ENCODE measurements at regions of chr4 and their contacts with region 1.

Region 1: GRCh38 chr4:107666134-107666533 is 53.9 kb downstream of the PAPSS1 start:
- DNase-seq: peak; percentile 55
- ATAC-seq: peak; percentile 68
- H3K4me3 ChIP-seq: no peak overlapping the region
- H3K27ac ChIP-seq: no peak overlapping the region
- H3K4me1 ChIP-seq: peaks cover 2% of the 10 kb centered on the region; the same call in 1 of the 2 replicates
- H3K27me3 ChIP-seq: no peaks in the 10 kb centered on the region
- CTCF ChIP-seq: peak; percentile 66
- POLR2A ChIP-seq: no peak
- RAD21 ChIP-seq: peak; percentile 62

Region 2: DNA sequence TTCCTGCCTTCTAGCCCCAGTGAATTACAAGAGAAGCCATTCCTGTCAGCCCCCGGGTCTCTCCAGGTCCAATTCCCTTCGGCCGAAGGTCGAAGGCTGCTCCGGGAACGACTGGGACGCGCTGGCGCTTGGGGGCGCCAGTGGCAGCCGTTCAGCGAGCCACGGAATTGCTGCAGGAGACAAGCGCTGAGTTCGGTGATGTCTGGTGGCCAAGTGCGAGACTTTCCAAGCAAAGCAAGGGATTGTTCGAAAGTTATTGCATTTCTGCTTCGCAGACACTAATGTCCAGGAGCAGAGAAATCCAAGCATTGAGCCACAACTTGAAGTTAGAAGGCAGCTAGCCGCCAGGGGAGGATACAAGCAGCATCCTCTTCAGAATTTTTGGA is 628.9 kb before region 1 on chr4:
- CTCF ChIA-PET with region 1: no interaction called
- POLR2A ChIA-PET with region 1: no interaction called
- dilution Hi-C with region 1: no loop called
- in situ Hi-C with region 1: loop called (anchors 25 kb)
- intact Hi-C with region 1: loop called (anchors 5 kb)
- DNase-seq: peak; percentile 2
- ATAC-seq: peak; percentile 52
- H3K4me3 ChIP-seq: no peak overlapping the region
- H3K27ac ChIP-seq: no peak overlapping the region
- H3K4me1 ChIP-seq: no peaks in the 10 kb centered on the region
- H3K27me3 ChIP-seq: peaks cover 37% of the 10 kb centered on the region
- CTCF ChIP-seq: peak; percentile 44
- POLR2A ChIP-seq: no peak
- RAD21 ChIP-seq: peak; percentile 29

Region 3: GRCh38 chr4:107094332-107094731 is 571.8 kb before region 1 on chr4:
- CTCF ChIA-PET with region 1: no interaction called
- POLR2A ChIA-PET with region 1: no interaction called
- dilution Hi-C with region 1: no loop called
- in situ Hi-C with region 1: no loop called
- intact Hi-C with region 1: loop called (anchors 1 kb)
- DNase-seq: peak; percentile 20
- ATAC-seq: peak; percentile 49; the same call in 1 of the 2 replicates
- H3K4me3 ChIP-seq: no peak overlapping the region
- H3K27ac ChIP-seq: no peak overlapping the region
- H3K4me1 ChIP-seq: no peaks in the 10 kb centered on the region
- H3K27me3 ChIP-seq: no peaks in the 10 kb centered on the region
- CTCF ChIP-seq: peak; percentile 37; the same call in 1 of the 2 replicates
- POLR2A ChIP-seq: no peak
- RAD21 ChIP-seq: peak; percentile 37

Region 4: DNA sequence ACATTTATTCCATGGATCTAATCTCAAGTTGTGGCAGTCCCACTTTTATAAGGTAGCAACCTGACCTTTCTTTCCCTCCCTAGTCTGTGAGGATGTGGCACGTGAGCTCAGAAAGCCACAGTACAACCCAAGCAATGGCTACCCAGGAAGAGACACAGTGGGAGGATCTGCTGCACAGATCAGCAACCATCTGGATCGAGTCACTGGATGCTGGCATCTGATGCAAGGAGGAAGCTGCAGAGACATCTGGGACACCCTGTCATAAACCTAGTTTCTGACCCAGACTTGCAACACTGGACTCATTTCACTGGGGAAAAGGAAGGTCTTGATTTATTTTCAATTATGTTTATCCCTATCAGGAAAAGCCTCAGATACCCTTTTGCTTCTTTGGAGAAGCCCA is 273.2 kb before region 1 on chr4:
- CTCF ChIA-PET with region 1: no interaction called
- POLR2A ChIA-PET with region 1: no interaction called
- dilution Hi-C with region 1: no loop called
- in situ Hi-C with region 1: no loop called
- intact Hi-C with region 1: loop called (anchors 10 kb)
- DNase-seq: peak; percentile 1
- ATAC-seq: peak; percentile 61
- H3K4me3 ChIP-seq: no peak overlapping the region
- H3K27ac ChIP-seq: no peak overlapping the region
- H3K4me1 ChIP-seq: no peaks in the 10 kb centered on the region
- H3K27me3 ChIP-seq: no peaks in the 10 kb centered on the region
- CTCF ChIP-seq: no peak
- POLR2A ChIP-seq: no peak
- RAD21 ChIP-seq: no peak

Region 5: DNA sequence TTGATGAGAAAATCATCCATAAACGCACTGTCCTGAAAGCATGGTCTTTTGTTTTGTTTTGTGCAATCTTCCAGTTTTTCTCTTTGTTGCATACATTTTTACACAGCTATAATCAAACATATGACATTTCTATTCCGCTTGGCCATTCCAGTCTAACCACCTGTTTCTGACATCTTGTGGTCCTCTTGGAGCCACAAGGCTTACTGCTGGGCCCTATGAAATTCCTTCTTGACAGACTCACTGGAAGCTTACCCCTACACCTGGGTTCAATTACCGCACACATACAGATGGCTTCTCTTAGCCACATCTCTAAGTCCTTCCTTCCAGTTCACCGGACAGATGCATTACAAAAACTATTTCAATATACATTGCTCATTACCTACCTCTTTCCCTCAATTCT is 18.5 kb before region 1 on chr4:
- CTCF ChIA-PET with region 1: no interaction called
- POLR2A ChIA-PET with region 1: no interaction called
- dilution Hi-C with region 1: no loop called
- in situ Hi-C with region 1: no loop called
- intact Hi-C with region 1: no loop called
- DNase-seq: peak; percentile 6
- ATAC-seq: no peak
- H3K4me3 ChIP-seq: no peak overlapping the region
- H3K27ac ChIP-seq: no peak overlapping the region
- H3K4me1 ChIP-seq: no peaks in the 10 kb centered on the region
- H3K27me3 ChIP-seq: no peaks in the 10 kb centered on the region
- CTCF ChIP-seq: no peak
- POLR2A ChIP-seq: no peak
- RAD21 ChIP-seq: no peak

Measured in IMR-90 (cell line).